ENCODE measurements at regions of chr12 and their contacts with region 1.

Region 1: GRCh38 chr12:64669270-64669842 is 59.1 kb downstream of the RASSF3 start:
- DNase-seq: no peak
- ATAC-seq: peak; percentile 62
- H3K4me3 ChIP-seq: peak overlapping the region in 1 of 2 experiments; percentile 29; a peak in 2 of 4 replicates
- H3K27ac ChIP-seq: peak overlapping the region; percentile 98
- H3K4me1 ChIP-seq: peaks cover 98% of the 10 kb centered on the region
- H3K27me3 ChIP-seq: no peaks in the 10 kb centered on the region
- CTCF ChIP-seq: no peak

Region 2: DNA sequence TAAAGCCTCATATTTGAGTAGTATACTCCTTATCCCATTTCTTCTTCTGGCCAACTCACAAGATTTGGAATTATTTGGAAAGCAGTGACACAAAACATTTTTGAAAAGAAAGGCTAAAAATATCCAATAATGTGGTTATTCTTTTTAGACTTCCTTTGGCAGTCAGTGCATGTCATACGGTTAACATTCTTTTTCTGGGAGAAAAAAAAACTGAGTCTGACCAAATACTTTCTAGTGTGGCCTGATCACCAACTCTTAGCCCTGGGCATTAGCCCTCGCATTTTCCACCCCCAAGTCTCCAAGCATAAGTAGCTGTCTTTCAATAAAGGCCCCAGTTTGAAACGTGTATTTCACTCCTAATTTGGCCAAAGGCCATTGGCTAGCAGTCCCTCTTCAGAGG is 53.2 kb before region 1 on chr12:
- CTCF ChIA-PET with region 1: no interaction called
- POLR2A ChIA-PET with region 1: no interaction called
- in situ Hi-C with region 1: no loop called
- intact Hi-C with region 1: loop called (anchors 2 kb)
- DNase-seq: no peak
- ATAC-seq: no peak
- H3K4me3 ChIP-seq: no peak overlapping the region
- H3K27ac ChIP-seq: peak overlapping the region; percentile 64
- H3K4me1 ChIP-seq: peaks cover 69% of the 10 kb centered on the region
- H3K27me3 ChIP-seq: no peaks in the 10 kb centered on the region
- CTCF ChIP-seq: no peak

Region 3: DNA sequence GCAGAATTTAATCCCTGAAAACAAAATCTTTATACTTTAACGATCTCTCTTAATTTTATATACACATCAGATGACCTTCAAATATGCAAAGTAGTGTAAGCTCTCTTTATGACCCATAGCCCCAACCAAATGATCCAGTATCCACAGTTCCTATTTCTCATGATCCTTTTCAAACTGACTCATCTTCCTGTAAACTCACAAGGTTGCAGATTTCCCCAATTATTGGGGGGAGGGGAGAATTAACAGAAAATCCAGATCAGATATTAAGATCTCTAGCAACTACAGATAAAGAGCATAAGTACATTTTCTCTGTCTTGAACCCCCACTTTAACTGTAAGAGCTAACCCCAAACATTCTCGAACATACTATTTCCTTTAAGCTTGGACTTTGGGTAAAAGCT is 77.3 kb after region 1 on chr12:
- CTCF ChIA-PET with region 1: no interaction called
- POLR2A ChIA-PET with region 1: no interaction called
- in situ Hi-C with region 1: no loop called
- intact Hi-C with region 1: no loop called
- DNase-seq: no peak
- ATAC-seq: no peak
- H3K4me3 ChIP-seq: no peak overlapping the region
- H3K27ac ChIP-seq: no peak overlapping the region
- H3K4me1 ChIP-seq: peaks cover 2% of the 10 kb centered on the region; the same call in 1 of the 2 replicates
- H3K27me3 ChIP-seq: no peaks in the 10 kb centered on the region
- CTCF ChIP-seq: no peak

Region 4: DNA sequence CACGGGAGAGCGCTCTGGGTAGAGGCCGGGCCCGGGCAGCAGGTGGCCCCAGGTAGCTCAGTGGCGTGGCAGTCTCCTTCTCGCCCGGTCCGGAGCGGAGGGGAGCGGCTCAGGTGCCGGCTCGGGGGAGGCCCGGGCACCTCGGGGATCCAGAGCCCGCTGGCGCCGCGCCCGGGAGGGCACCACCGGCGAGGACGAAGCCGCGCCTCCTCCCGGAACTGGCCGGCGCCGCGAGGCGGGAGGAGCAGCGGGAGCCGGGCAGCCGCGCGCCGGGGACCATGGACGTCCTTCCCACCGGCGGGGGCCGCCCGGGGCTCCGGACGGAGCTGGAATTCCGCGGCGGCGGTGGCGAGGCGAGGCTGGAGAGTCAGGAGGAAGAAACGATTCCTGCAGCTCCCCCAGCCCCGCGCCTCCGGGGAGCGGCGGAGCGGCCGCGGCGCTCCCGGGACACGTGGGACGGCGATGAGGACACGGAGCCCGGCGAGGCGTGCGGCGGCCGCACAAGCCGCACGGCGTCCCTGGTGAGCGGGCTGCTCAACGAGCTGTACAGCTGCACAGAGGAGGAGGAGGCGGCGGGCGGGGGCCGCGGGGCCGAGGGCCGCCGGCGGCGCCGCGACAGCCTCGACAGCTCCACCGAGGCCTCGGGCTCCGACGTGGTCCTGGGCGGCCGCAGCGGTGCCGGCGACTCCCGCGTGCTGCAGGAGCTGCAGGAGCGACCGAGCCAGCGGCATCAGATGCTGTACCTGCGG is 111.3 kb after region 1 on chr12:
- CTCF ChIA-PET with region 1: no interaction called
- POLR2A ChIA-PET with region 1: no interaction called
- in situ Hi-C with region 1: no loop called
- intact Hi-C with region 1: no loop called
- DNase-seq: no peak
- ATAC-seq: peak; percentile 87
- H3K4me3 ChIP-seq: peak overlapping the region; percentile 45 to 73
- H3K27ac ChIP-seq: no peak overlapping the region
- H3K4me1 ChIP-seq: no peaks in the 10 kb centered on the region; the same call in 1 of the 2 replicates
- H3K27me3 ChIP-seq: peaks cover 22% of the 10 kb centered on the region
- CTCF ChIP-seq: peak; percentile 11

Region 5: DNA sequence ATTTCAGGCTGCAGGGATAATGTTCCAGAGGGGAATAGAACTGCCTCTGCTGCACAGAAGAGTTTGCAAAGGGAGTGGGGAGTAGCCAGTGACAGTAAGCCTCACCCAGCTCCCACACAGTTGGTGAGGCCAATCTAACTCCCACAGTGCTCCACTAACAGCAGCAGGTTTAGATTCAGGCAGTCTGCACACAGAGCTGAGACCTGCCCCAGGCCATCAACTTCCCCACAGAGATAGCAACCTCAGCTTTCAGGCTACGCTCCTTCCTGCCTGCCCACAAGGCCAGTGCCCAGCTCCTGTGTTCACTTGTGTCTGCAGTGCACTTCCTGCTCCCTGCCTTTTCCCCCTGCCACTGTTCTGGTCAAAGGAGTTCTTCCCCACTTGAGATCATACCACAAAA is 262.6 kb after region 1 on chr12:
- CTCF ChIA-PET with region 1: no interaction called
- POLR2A ChIA-PET with region 1: no interaction called
- in situ Hi-C with region 1: no loop called
- intact Hi-C with region 1: no loop called
- DNase-seq: no peak
- ATAC-seq: no peak
- H3K4me3 ChIP-seq: no peak overlapping the region
- H3K27ac ChIP-seq: no peak overlapping the region
- H3K4me1 ChIP-seq: no peaks in the 10 kb centered on the region
- H3K27me3 ChIP-seq: no peaks in the 10 kb centered on the region; the same call in none of the 2 replicates
- CTCF ChIP-seq: no peak

Measured in Panc1 (cell line).